ENCODE measurements at regions of chr1 and their contacts with region 1.

Region 1: DNA sequence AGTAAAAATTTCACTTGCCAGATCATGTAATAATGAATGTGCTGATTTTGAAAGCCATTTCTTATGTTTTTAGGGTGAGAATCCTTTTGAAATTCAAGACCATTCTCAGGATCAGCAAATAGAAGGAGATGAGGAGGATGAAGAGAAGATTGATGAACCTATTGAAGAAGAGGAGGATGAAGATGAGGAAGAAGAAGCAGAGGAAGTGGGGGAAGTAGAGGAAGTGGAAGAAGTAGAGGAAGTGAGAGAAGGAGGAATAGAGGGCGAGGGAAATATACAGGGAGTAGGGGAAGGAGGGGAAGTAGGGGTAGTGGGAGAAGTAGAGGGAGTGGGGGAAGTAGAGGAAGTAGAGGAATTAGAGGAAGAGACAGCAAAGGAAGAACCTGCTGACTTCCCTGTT is 32.4 kb downstream of the ZNF326 start:
- DNase-seq: no peak
- H3K4me3 ChIP-seq: no peak overlapping the region
- H3K27ac ChIP-seq: no peak overlapping the region
- H3K4me1 ChIP-seq: no peaks in the 10 kb centered on the region
- H3K27me3 ChIP-seq: no peaks in the 10 kb centered on the region
- CTCF ChIP-seq: no peak
- EP300 ChIP-seq: no peak
- RAD21 ChIP-seq: no peak

Region 2: GRCh38 chr1:90045853-90046563 is 18.7 kb after region 1 on chr1:
- CTCF ChIA-PET with region 1: interaction called, 43 read pairs
- POLR2A ChIA-PET with region 1: no interaction called
- DNase-seq: peak; percentile 39
- H3K4me3 ChIP-seq: no peak overlapping the region; a peak in 1 of 4 replicates
- H3K27ac ChIP-seq: no peak overlapping the region
- H3K4me1 ChIP-seq: peaks cover 0 to 4% of the 10 kb centered on the region in 2 experiments; a peak in 1 of 4 replicates
- H3K27me3 ChIP-seq: peaks cover 3% of the 10 kb centered on the region; the same call in 1 of the 2 replicates
- CTCF ChIP-seq: peak; percentile 74
- EP300 ChIP-seq: no peak
- RAD21 ChIP-seq: peak; percentile 82

Measured in SK-N-SH (cell line).